Naive thymus-derived CD4-positive, alpha-beta T cell (primary cell): ENCODE measurements at regions of chr7 and their contacts with region 1.

Region 1: DNA sequence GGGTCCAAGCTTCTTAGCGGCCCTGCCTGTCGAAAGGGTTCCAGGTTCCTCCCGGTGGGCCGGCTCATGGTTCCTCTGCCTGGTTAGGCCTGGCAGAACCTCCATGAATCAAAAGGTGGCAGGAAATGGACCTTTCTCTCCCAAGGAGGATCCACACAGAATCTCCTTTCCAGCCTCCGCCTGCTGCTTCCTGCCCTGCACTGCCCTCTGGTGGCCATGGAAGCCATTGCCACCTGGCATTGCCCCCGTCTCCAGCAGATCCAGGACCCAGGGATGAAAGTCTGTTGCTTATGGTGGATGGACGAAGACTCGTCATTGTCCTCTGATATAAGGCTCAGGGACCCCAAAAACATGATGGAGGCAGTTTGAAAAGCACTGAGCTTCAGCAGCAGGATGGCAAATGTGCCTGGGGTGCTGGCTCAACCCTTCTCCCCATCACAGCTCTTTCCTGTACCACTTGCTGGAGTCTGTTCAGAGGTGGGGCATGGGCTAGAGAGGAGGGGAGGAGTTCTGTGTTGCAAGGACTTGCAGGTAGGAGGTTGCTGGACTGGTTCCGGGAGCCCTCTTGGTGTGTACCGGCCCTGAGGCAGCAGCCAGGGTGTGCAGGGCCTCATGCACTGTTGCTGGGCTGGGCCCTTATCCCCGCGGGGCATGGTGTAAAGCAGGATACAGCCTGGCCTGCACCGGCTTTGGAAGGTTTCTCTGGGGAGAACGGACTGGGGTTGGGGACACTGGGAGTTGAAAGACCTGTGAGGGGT is 11.3 kb upstream of the INMT start:
- DNase-seq: peak; percentile 55 to 85 (median 72)
- ATAC-seq: peak; percentile 74
- H3K4me3 ChIP-seq: no peak overlapping the region
- H3K4me3 Mint-ChIP-seq: peak overlapping the region in 3 of 10 donors; percentile 18 to 42 (median 35)
- H3K27ac ChIP-seq: no peak overlapping the region
- H3K27ac Mint-ChIP-seq: peak overlapping the region in 7 of 9 donors; percentile 47 to 95 (median 73)
- H3K4me1 ChIP-seq: peaks cover 27 to 41% of the 10 kb centered on the region in 2 donors
- H3K4me1 Mint-ChIP-seq: peaks cover 22 to 44% (median 39%) of the 10 kb centered on the region in 7 donors
- H3K27me3 ChIP-seq: no peaks in the 10 kb centered on the region
- H3K27me3 Mint-ChIP-seq: peaks cover 0 to 5% (median 0%) of the 10 kb centered on the region in 5 donors

Region 2: DNA sequence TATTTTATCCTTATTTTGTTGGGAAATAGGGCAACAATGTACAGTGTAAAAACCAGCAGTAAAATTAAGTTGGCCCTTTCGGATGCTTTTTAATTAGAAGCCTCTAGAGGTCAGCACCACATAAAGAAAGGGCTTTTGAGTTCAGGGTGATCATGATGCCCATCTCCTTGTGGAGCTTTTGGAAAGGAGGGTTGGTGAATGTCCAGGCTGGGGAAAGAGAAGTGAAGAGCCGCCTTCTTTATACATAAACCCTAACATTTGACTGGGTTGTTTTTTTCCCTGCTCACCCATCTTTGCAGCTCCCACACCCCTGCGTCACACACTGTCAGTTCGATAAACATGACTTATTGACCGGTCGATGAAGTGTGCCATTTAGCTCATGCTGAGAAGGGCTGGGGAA is 576.0 kb before region 1 on chr7:
- CTCF ChIA-PET with region 1: no interaction called
- POLR2A ChIA-PET with region 1: no interaction called
- intact Hi-C with region 1: loop called in 1 of 2 experiments (anchors 5 kb)
- DNase-seq: no peak
- ATAC-seq: peak; percentile 43
- H3K4me3 ChIP-seq: no peak overlapping the region
- H3K4me3 Mint-ChIP-seq: no peak overlapping the region
- H3K27ac ChIP-seq: no peak overlapping the region
- H3K27ac Mint-ChIP-seq: no peak overlapping the region
- H3K4me1 ChIP-seq: peaks cover 10 to 20% of the 10 kb centered on the region in 2 donors
- H3K4me1 Mint-ChIP-seq: peaks cover 25 to 44% (median 32%) of the 10 kb centered on the region in 7 donors
- H3K27me3 ChIP-seq: no peaks in the 10 kb centered on the region
- H3K27me3 Mint-ChIP-seq: peaks cover 0 to 3% (median 0%) of the 10 kb centered on the region in 5 donors

Region 3: GRCh38 chr7:30548762-30549344 is 191.8 kb before region 1 on chr7:
- CTCF ChIA-PET with region 1: interaction called, 6 read pairs
- POLR2A ChIA-PET with region 1: no interaction called
- intact Hi-C with region 1: loop called (anchors 1 kb)
- DNase-seq: peak in 4 of 9 donors; percentile 2 to 22 (median 8)
- ATAC-seq: peak; percentile 61
- H3K4me3 ChIP-seq: no peak overlapping the region
- H3K4me3 Mint-ChIP-seq: no peak overlapping the region
- H3K27ac ChIP-seq: no peak overlapping the region
- H3K27ac Mint-ChIP-seq: no peak overlapping the region
- H3K4me1 ChIP-seq: no peaks in the 10 kb centered on the region
- H3K4me1 Mint-ChIP-seq: peaks cover 0 to 6% (median 0%) of the 10 kb centered on the region in 7 donors
- H3K27me3 ChIP-seq: no peaks in the 10 kb centered on the region
- H3K27me3 Mint-ChIP-seq: no peaks in the 10 kb centered on the region

Region 4: DNA sequence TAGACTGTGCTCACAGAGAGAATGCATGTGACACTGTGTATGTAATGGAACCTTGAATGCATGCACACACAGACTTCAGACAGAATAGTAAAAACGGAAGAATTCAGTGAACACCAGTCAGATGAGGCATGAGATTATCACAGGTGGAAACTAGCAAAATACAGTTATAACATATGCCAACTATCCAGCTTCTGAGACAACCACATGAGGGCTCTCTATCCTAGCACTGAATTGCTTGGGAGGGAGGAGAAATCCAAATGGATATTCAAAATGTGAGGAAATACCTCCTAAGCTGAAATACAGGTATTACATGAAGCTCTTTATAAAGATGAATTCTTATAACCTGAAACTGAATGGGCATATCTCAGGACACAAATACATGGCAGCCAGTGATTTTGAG is 115.3 kb before region 1 on chr7:
- CTCF ChIA-PET with region 1: interaction called, 3 read pairs
- POLR2A ChIA-PET with region 1: no interaction called
- intact Hi-C with region 1: loop called (anchors 2 to 5 kb)
- DNase-seq: no peak
- ATAC-seq: no peak
- H3K4me3 ChIP-seq: no peak overlapping the region
- H3K4me3 Mint-ChIP-seq: no peak overlapping the region
- H3K27ac ChIP-seq: no peak overlapping the region
- H3K27ac Mint-ChIP-seq: peak overlapping the region in 4 of 9 donors; percentile 3 to 65 (median 27)
- H3K4me1 ChIP-seq: peaks cover 0 to 3% of the 10 kb centered on the region in 2 donors
- H3K4me1 Mint-ChIP-seq: peaks cover 0 to 30% (median 0%) of the 10 kb centered on the region in 7 donors
- H3K27me3 ChIP-seq: no peaks in the 10 kb centered on the region
- H3K27me3 Mint-ChIP-seq: no peaks in the 10 kb centered on the region

Region 5: GRCh38 chr7:30659312-30659711 is 81.3 kb before region 1 on chr7:
- CTCF ChIA-PET with region 1: no interaction called
- POLR2A ChIA-PET with region 1: no interaction called
- intact Hi-C with region 1: no loop called
- DNase-seq: no peak
- ATAC-seq: no peak
- H3K4me3 ChIP-seq: no peak overlapping the region
- H3K4me3 Mint-ChIP-seq: no peak overlapping the region
- H3K27ac ChIP-seq: no peak overlapping the region
- H3K27ac Mint-ChIP-seq: no peak overlapping the region
- H3K4me1 ChIP-seq: no peaks in the 10 kb centered on the region
- H3K4me1 Mint-ChIP-seq: peaks cover 0 to 5% (median 0%) of the 10 kb centered on the region in 7 donors
- H3K27me3 ChIP-seq: no peaks in the 10 kb centered on the region
- H3K27me3 Mint-ChIP-seq: peaks cover 0 to 4% (median 0%) of the 10 kb centered on the region in 5 donors

Region 6: GRCh38 chr7:30702200-30702599 is 38.4 kb before region 1 on chr7:
- CTCF ChIA-PET with region 1: interaction called, 106 read pairs
- POLR2A ChIA-PET with region 1: interaction called, 8 read pairs
- intact Hi-C with region 1: loop called (anchors 1 kb)
- DNase-seq: peak in 6 of 9 donors; percentile 18 to 53 (median 38)
- ATAC-seq: peak; percentile 34
- H3K4me3 ChIP-seq: no peak overlapping the region
- H3K4me3 Mint-ChIP-seq: no peak overlapping the region
- H3K27ac ChIP-seq: no peak overlapping the region
- H3K27ac Mint-ChIP-seq: peak overlapping the region in 2 of 9 donors; percentile 53 to 62
- H3K4me1 ChIP-seq: no peaks in the 10 kb centered on the region
- H3K4me1 Mint-ChIP-seq: peaks cover 7 to 30% (median 12%) of the 10 kb centered on the region in 7 donors
- H3K27me3 ChIP-seq: no peaks in the 10 kb centered on the region
- H3K27me3 Mint-ChIP-seq: peaks cover 0 to 11% (median 0%) of the 10 kb centered on the region in 5 donors

Region 7: GRCh38 chr7:31000161-31000693 is 259.6 kb after region 1 on chr7:
- CTCF ChIA-PET with region 1: no interaction called
- POLR2A ChIA-PET with region 1: no interaction called
- intact Hi-C with region 1: no loop called
- DNase-seq: no peak
- ATAC-seq: no peak
- H3K4me3 ChIP-seq: no peak overlapping the region
- H3K4me3 Mint-ChIP-seq: no peak overlapping the region
- H3K27ac ChIP-seq: no peak overlapping the region
- H3K27ac Mint-ChIP-seq: no peak overlapping the region
- H3K4me1 ChIP-seq: no peaks in the 10 kb centered on the region
- H3K4me1 Mint-ChIP-seq: no peaks in the 10 kb centered on the region
- H3K27me3 ChIP-seq: no peaks in the 10 kb centered on the region
- H3K27me3 Mint-ChIP-seq: peaks cover 0 to 8% (median 0%) of the 10 kb centered on the region in 5 donors